Cardiac septum (tissue), 1 donor: ENCODE measurements at regions of chr1 and their contacts with region 1.

Region 1: DNA sequence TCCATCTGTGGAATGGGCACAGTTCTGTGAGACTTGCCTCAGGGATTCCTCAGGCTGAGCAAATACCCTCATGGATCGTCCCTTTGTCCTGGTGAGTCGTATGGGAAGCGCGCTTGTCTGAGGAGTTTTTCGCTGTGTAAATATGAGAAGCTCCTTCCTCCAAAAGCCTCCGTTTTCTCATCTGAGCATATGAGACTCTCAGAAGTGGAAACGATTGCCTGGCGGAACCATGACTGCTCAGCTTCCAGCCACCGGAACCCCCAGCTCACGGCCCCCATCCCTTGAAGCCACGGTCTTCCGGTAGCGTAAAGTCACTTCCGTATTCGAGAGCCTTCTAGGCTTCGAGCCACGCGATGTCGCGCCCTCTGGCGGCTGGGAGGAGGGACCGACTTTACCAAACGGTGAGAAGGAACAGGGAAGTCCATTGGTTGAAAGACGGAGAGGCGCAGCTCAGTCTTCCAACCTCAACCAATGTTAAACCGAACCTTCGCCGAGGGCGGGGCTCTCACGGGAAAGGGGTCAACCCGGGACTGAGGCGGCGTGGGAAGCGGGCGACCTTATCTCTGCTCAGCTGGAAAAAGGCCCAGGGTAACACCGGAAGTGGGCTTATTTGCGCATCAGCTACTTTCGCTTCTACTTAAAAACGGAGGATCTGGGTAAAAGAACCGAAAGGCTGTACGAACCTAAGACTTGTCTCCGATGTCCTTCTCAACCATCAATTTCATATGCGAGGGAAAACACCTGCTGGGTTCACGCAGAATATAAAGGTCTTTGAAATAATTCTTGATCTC is 46.2 kb downstream of the AZIN2 start:
- DNase-seq: peak; percentile 99

Region 2: DNA sequence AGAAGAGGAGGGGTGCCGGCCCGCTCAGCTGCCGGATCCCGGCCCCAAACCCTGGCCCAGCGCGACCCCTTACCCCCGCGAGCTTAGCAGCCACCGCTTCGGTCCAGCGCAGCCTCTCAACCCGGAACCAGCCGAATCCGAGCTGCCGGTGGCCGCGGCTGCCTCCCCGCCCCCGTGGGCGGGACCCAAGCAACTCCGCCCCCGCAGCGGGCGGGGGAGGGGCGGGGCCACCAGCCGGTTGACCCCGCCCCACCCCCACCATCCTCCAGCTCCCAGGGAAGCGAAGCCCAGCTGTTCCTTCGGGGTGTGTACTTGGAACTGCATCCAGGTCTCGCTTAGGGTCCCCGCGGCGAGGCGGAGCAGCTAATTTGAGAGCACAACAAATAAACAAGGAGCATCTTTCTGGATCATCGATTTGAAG is 54.7 kb after region 1 on chr1 and contains the start of gene TRIM62:
- intact Hi-C with region 1: loop called (anchors 5 kb)
- DNase-seq: peak; percentile 94
- total RNA-seq, gene TRIM62: 3.5 TPM

Region 3: DNA sequence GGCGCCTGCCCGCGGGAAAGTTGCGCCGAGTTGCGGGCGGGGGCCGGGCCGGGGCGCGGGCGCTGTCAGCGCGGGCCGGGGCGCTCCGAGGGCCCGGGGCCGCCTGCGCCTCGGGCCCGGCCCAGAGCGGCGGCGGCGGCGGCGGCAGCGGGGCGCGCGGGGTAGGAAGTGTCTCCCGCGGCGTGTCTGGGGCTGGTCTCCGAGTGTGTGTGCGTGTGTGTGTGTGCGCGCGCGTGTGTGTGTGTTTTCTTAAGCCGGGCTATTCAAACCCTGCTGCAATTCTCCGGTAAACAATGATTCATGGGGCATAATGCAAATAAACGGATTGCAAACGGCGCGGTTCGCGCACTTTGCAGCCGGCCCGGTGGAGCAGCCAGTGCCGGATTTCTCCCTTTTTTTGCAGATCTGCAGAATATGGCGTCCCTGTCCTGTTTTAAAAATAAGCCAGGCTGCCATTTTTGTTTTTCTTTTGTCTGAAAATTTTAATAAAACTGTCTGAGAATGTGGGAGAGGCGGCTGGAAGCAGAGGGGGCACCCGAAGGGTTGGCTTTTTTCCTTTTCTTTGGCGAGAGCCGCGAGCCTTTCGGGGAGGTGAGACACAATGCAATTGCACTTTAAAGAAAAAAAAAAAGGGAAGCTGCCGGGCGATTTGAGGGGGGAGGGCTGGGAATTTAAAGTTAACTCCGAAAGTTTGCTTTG is 129.7 kb after region 1 on chr1:
- intact Hi-C with region 1: loop called (anchors 5 kb)
- DNase-seq: peak; percentile 80

Region 4: DNA sequence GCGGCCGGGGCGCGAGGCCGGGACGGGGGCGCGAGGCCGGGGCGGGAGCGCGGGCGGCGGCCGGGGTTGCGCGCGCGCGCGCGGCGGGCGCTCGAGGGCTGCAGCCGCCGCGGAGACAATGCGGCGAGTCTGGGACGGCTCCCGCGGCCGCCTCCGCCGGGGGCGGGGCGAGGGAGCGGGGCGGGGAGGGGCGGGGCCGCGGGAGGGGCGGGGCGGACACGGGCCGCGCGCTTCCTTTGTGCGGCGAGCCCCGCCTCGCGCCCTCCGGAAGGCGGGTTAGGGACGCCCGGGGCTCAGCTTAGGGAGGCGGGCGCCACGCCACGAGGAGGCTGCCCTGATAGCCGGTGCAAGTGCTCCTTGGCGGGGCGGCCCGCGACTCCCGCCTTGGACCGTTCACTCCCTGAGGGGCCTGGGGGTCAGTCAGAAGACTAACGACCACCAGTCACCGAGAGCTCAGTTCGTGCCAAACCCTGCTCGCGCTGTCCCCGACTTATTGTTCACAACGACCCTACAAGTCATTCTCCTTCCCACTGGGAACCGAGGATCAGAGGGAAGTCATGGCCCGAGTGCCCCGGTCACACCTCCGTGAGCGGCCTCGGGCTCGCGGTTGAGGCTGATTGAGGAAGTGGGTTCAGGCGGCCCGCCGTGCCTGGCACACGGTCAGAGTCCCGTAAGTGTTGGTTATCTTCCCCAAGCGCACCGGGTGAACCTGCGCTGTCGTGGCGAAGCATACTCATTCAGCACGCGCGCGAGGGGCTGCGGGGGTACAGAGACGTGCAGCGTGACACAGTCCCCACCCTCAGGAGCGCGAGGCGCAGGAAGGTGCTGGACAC is 222.8 kb after region 1 on chr1:
- intact Hi-C with region 1: loop called (anchors 5 kb)
- DNase-seq: peak; percentile 94